ENCODE measurements at regions of chr19 and their contacts with region 1.

Region 1: GRCh38 chr19:57362997-57363705 is at the starts of genes TRAPPC2B and ZNF547:
- DNase-seq: peak; percentile 89 to 99 (median 98)
- ATAC-seq: peak; percentile 97
- H3K4me3 ChIP-seq: peak within 1 kb of the TSS; percentile 74
- H3K4me3 Mint-ChIP-seq: peak within 1 kb of the TSS; percentile 90 to 97 (median 94)
- H3K27ac ChIP-seq: peak within 1 kb of the TSS; percentile 84
- H3K27ac Mint-ChIP-seq: peak within 1 kb of the TSS; percentile 94 to 100 (median 97)
- H3K4me1 ChIP-seq: peaks cover 9 to 14% of the 10 kb centered on the region in 2 donors
- H3K4me1 Mint-ChIP-seq: peaks cover 12 to 26% (median 18%) of the 10 kb centered on the region in 7 donors
- H3K27me3 ChIP-seq: no peaks in the 10 kb centered on the region
- H3K27me3 Mint-ChIP-seq: peaks cover 0 to 2% (median 0%) of the 10 kb centered on the region in 5 donors
- total RNA-seq, gene TRAPPC2B: 7.7 to 11.8 (median 9.0) TPM
- total RNA-seq, gene ZNF547: 0.40 to 10.1 (median 3.6) TPM

Region 2: GRCh38 chr19:55777528-55777927 is 1585.6 kb before region 1 on chr19:
- CTCF ChIA-PET with region 1: no interaction called
- POLR2A ChIA-PET with region 1: no interaction called
- intact Hi-C with region 1: no loop called
- DNase-seq: no peak
- ATAC-seq: no peak
- H3K4me3 ChIP-seq: no peak overlapping the region
- H3K4me3 Mint-ChIP-seq: no peak overlapping the region
- H3K27ac ChIP-seq: no peak overlapping the region
- H3K27ac Mint-ChIP-seq: no peak overlapping the region
- H3K4me1 ChIP-seq: no peaks in the 10 kb centered on the region
- H3K4me1 Mint-ChIP-seq: no peaks in the 10 kb centered on the region
- H3K27me3 ChIP-seq: peaks cover 0 to 3% of the 10 kb centered on the region in 2 donors
- H3K27me3 Mint-ChIP-seq: peaks cover 0 to 69% (median 54%) of the 10 kb centered on the region in 5 donors

Region 3: GRCh38 chr19:57016076-57016475 is 347.1 kb before region 1 on chr19:
- CTCF ChIA-PET with region 1: no interaction called
- POLR2A ChIA-PET with region 1: no interaction called
- intact Hi-C with region 1: no loop called
- DNase-seq: no peak
- ATAC-seq: no peak
- H3K4me3 ChIP-seq: no peak overlapping the region
- H3K4me3 Mint-ChIP-seq: no peak overlapping the region
- H3K27ac ChIP-seq: no peak overlapping the region
- H3K27ac Mint-ChIP-seq: no peak overlapping the region
- H3K4me1 ChIP-seq: no peaks in the 10 kb centered on the region
- H3K4me1 Mint-ChIP-seq: peaks cover 0 to 2% (median 0%) of the 10 kb centered on the region in 7 donors
- H3K27me3 ChIP-seq: no peaks in the 10 kb centered on the region
- H3K27me3 Mint-ChIP-seq: peaks cover 0 to 6% (median 0%) of the 10 kb centered on the region in 5 donors

Region 4: GRCh38 chr19:57240311-57241090 is 122.7 kb before region 1 on chr19 and contains the start of gene ZNF805:
- CTCF ChIA-PET with region 1: no interaction called
- POLR2A ChIA-PET with region 1: no interaction called
- intact Hi-C with region 1: loop called (anchors 1 kb)
- DNase-seq: peak; percentile 82 to 96 (median 93)
- ATAC-seq: peak; percentile 97
- H3K4me3 ChIP-seq: peak within 1 kb of the TSS; percentile 73
- H3K4me3 Mint-ChIP-seq: peak within 1 kb of the TSS; percentile 88 to 97 (median 94)
- H3K27ac ChIP-seq: peak within 1 kb of the TSS; percentile 95
- H3K27ac Mint-ChIP-seq: peak within 1 kb of the TSS; percentile 96 to 99 (median 97)
- H3K4me1 ChIP-seq: peaks cover 19% of the 10 kb centered on the region in 2 donors
- H3K4me1 Mint-ChIP-seq: peaks cover 20 to 44% (median 36%) of the 10 kb centered on the region in 7 donors
- H3K27me3 ChIP-seq: no peaks in the 10 kb centered on the region
- H3K27me3 Mint-ChIP-seq: peaks cover 0 to 3% (median 0%) of the 10 kb centered on the region in 5 donors
- total RNA-seq, gene ZNF805: 12.0 to 26.2 (median 23.7) TPM

Region 5: GRCh38 chr19:57389730-57390598 is 26.8 kb after region 1 on chr19 and contains the start of gene ZNF548:
- CTCF ChIA-PET with region 1: no interaction called
- POLR2A ChIA-PET with region 1: interaction called, 9 read pairs
- intact Hi-C with region 1: loop called (anchors 1 kb)
- DNase-seq: peak; percentile 85 to 99 (median 92)
- ATAC-seq: peak; percentile 98
- H3K4me3 ChIP-seq: peak within 1 kb of the TSS; percentile 72
- H3K4me3 Mint-ChIP-seq: peak within 1 kb of the TSS; percentile 89 to 100 (median 97)
- H3K27ac ChIP-seq: peak within 1 kb of the TSS; percentile 93
- H3K27ac Mint-ChIP-seq: peak within 1 kb of the TSS; percentile 91 to 100 (median 97)
- H3K4me1 ChIP-seq: peaks cover 13 to 15% of the 10 kb centered on the region in 2 donors
- H3K4me1 Mint-ChIP-seq: peaks cover 11 to 45% (median 29%) of the 10 kb centered on the region in 7 donors
- H3K27me3 ChIP-seq: no peaks in the 10 kb centered on the region
- H3K27me3 Mint-ChIP-seq: no peaks in the 10 kb centered on the region
- total RNA-seq, gene ZNF548: 26.4 to 115 (median 66.9) TPM

Region 6: GRCh38 chr19:57527136-57527881 is 164.2 kb after region 1 on chr19 and contains the start of gene ZNF549:
- CTCF ChIA-PET with region 1: no interaction called
- POLR2A ChIA-PET with region 1: no interaction called
- intact Hi-C with region 1: loop called (anchors 1 to 5 kb)
- DNase-seq: peak; percentile 65 to 90 (median 88)
- ATAC-seq: peak; percentile 99
- H3K4me3 ChIP-seq: peak within 1 kb of the TSS; percentile 98
- H3K4me3 Mint-ChIP-seq: peak within 1 kb of the TSS; percentile 89 to 98 (median 96)
- H3K27ac ChIP-seq: peak within 1 kb of the TSS; percentile 94
- H3K27ac Mint-ChIP-seq: peak within 1 kb of the TSS; percentile 80 to 98 (median 95)
- H3K4me1 ChIP-seq: peaks cover 14 to 18% of the 10 kb centered on the region in 2 donors
- H3K4me1 Mint-ChIP-seq: peaks cover 15 to 36% (median 32%) of the 10 kb centered on the region in 7 donors
- H3K27me3 ChIP-seq: no peaks in the 10 kb centered on the region
- H3K27me3 Mint-ChIP-seq: peaks cover 0 to 4% (median 0%) of the 10 kb centered on the region in 5 donors
- total RNA-seq, gene ZNF549: 6.9 to 24.8 (median 11.3) TPM

Region 7: DNA sequence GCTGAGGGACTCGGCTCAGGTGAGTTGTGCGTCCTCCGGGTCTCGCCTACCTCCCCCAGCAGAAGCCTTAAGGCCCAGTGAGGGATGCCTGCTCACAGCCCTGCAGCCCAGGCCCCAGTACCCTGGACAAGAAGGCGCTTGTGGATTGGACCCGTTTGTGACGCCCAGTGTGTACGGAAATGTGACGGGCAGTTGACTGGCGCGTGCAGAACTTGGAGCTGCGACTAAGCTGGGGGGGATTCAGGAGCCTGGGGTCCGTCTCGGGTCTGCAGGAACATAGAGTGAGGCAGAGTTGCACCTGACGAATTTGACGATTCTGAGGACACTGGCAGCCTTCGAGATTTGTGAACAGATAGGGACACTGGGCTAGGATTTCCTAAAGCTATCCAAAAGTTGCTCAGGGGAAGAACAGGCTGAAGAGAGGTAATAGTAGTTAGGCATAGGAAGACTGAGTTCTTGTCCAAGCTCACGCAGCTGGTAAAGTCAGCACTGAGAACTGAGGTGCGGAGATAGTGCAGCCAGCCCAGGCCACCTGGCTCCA is 319.1 kb after region 1 on chr19:
- CTCF ChIA-PET with region 1: no interaction called
- POLR2A ChIA-PET with region 1: no interaction called
- intact Hi-C with region 1: loop called in 1 of 2 experiments (anchors 1 kb)
- DNase-seq: no peak
- ATAC-seq: no peak
- H3K4me3 ChIP-seq: peak overlapping the region; percentile 93
- H3K4me3 Mint-ChIP-seq: peak overlapping the region; percentile 89 to 99 (median 97)
- H3K27ac ChIP-seq: peak overlapping the region; percentile 80
- H3K27ac Mint-ChIP-seq: peak overlapping the region; percentile 90 to 98 (median 96)
- H3K4me1 ChIP-seq: peaks cover 9 to 13% of the 10 kb centered on the region in 2 donors
- H3K4me1 Mint-ChIP-seq: peaks cover 25 to 46% (median 39%) of the 10 kb centered on the region in 7 donors
- H3K27me3 ChIP-seq: no peaks in the 10 kb centered on the region
- H3K27me3 Mint-ChIP-seq: peaks cover 2 to 8% (median 7%) of the 10 kb centered on the region in 5 donors

Region 8: GRCh38 chr19:58278157-58279041 is 915.2 kb after region 1 on chr19 and contains the start of gene ZNF8:
- CTCF ChIA-PET with region 1: no interaction called
- POLR2A ChIA-PET with region 1: no interaction called
- intact Hi-C with region 1: loop called in 1 of 2 experiments (anchors 1 kb)
- DNase-seq: peak; percentile 84 to 96 (median 93)
- ATAC-seq: peak; percentile 99
- H3K4me3 ChIP-seq: peak within 1 kb of the TSS; percentile 93
- H3K4me3 Mint-ChIP-seq: peak within 1 kb of the TSS; percentile 89 to 99 (median 95)
- H3K27ac ChIP-seq: peak within 1 kb of the TSS; percentile 80
- H3K27ac Mint-ChIP-seq: peak within 1 kb of the TSS; percentile 88 to 97 (median 96)
- H3K4me1 ChIP-seq: peaks cover 12 to 15% of the 10 kb centered on the region in 2 donors
- H3K4me1 Mint-ChIP-seq: peaks cover 28 to 63% (median 43%) of the 10 kb centered on the region in 7 donors
- H3K27me3 ChIP-seq: no peaks in the 10 kb centered on the region
- H3K27me3 Mint-ChIP-seq: no peaks in the 10 kb centered on the region
- total RNA-seq, gene ZNF8: 5.2 to 10.5 (median 10.0) TPM

Measured in naive thymus-derived CD4-positive, alpha-beta T cell (primary cell).